ENCODE measurements at regions of chr3 and their contacts with region 1.

Region 1: DNA sequence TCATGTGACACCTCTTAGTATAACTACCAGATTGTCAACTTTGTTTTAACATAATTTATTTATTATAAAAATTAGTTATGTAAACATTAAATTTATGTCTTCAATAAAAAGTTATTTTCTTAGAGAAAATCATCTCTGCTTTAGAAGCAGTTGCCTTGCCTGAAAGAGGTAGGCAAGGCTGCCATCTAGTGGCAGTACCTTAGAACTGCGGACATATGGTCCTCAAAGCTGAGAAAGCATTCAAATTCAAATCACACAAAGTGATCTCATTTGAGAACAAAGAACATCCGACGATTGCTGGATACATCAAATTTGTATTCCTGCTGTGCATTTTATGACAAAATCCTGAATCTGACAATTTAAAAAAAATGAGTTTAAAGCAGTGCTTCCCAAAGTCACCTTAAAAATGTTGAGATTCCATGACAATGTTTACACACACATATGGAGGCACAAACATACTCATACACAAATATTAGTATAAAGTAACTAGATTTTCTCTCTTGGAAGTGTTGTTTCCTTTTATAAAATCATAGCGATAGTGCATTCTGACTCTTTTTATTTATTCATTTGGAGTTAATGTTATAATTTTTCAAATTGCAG is 617.4 kb downstream of the CADM2 start:
- DNase-seq: peak; percentile 12
- H3K4me3 Mint-ChIP-seq: no peak overlapping the region
- H3K27ac Mint-ChIP-seq: no peak overlapping the region
- H3K4me1 Mint-ChIP-seq: no peaks in the 10 kb centered on the region
- H3K27me3 Mint-ChIP-seq: no peaks in the 10 kb centered on the region

Region 2: GRCh38 chr3:84547971-84548970 is 1027.9 kb before region 1 on chr3:
- intact Hi-C with region 1: loop called (anchors 5 kb)
- DNase-seq: no peak
- H3K4me3 Mint-ChIP-seq: no peak overlapping the region
- H3K27ac Mint-ChIP-seq: no peak overlapping the region
- H3K4me1 Mint-ChIP-seq: no peaks in the 10 kb centered on the region
- H3K27me3 Mint-ChIP-seq: no peaks in the 10 kb centered on the region

Region 3: DNA sequence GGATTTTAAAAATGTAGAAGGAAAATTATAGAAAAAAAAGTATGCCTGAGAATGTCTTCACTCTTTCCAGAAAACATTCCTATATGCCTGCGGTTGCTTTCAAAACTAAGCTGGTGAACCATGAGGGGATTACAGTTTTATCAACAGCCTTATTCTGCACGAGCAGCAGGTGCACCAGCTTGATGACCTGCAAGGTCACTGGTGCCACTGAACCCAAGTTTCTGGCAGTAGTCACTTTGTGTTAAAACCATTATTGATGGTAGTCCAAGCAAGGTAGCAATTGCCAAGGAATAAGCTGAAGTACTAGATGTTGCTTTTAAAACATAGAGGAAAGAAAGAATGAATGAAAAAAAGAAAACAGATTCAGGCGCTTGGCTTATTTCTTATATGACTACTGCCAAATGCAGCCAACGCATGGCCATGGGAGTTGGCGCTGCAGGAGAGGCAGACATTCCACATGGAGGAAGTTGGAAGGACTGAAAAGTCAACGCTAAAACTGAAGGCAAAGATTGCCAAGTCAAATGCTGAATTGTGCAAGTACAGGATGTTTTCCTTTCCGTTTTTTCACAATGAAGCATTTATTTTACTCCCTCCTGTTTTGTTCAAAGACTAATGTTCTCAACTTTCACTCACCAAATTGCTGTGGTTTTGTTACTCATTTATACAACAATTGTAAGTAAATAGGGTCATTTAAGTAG is 16.0 kb before region 1 on chr3:
- intact Hi-C with region 1: loop called (anchors 1 kb)
- DNase-seq: no peak
- H3K4me3 Mint-ChIP-seq: no peak overlapping the region
- H3K27ac Mint-ChIP-seq: no peak overlapping the region
- H3K4me1 Mint-ChIP-seq: no peaks in the 10 kb centered on the region
- H3K27me3 Mint-ChIP-seq: no peaks in the 10 kb centered on the region

Measured in activated T-helper 2 cell treated with anti-CD3 and anti-CD28 coated beads, Interferon-gamma antibody, Interleukin-2, Interleukin-4, amounts not matched to agents 10 μg/mL and 5 μg/mL and 100 μg/mL, durations not matched to agents 14 hours and 24 hours and 36 hours (primary cell).